HCT116 (cell line): ENCODE measurements at regions of chr15 and their contacts with region 1.

Region 1: GRCh38 chr15:69058830-69059556 is 44.5 kb downstream of the NOX5 start:
- DNase-seq: peak; percentile 88
- ATAC-seq: peak; percentile 87
- H3K4me3 ChIP-seq: no peak overlapping the region
- H3K27ac ChIP-seq: no peak overlapping the region
- H3K4me1 ChIP-seq: peaks cover 0 to 24% of the 10 kb centered on the region in 2 experiments; a peak in 2 of 4 replicates
- H3K27me3 ChIP-seq: no peaks in the 10 kb centered on the region
- CTCF ChIP-seq: peak; percentile 80 to 92 (median 92)
- POLR2A ChIP-seq: no peak
- RAD21 ChIP-seq: peak; percentile 97

Region 2: GRCh38 chr15:68852461-68852860 is 206.5 kb before region 1 on chr15:
- CTCF ChIA-PET with region 1: no interaction called
- POLR2A ChIA-PET with region 1: no interaction called
- RAD21 ChIA-PET with region 1: no interaction called
- intact Hi-C with region 1: no loop called
- DNase-seq: no peak
- ATAC-seq: no peak
- H3K4me3 ChIP-seq: no peak overlapping the region
- H3K27ac ChIP-seq: no peak overlapping the region
- H3K4me1 ChIP-seq: no peaks in the 10 kb centered on the region
- H3K27me3 ChIP-seq: no peaks in the 10 kb centered on the region
- CTCF ChIP-seq: no peak
- POLR2A ChIP-seq: no peak
- RAD21 ChIP-seq: no peak

Region 3: GRCh38 chr15:69225355-69226025 is 166.5 kb after region 1 on chr15:
- CTCF ChIA-PET with region 1: interaction called, 10 read pairs
- POLR2A ChIA-PET with region 1: no interaction called
- RAD21 ChIA-PET with region 1: interaction called in 1 of 2 experiments, 5 read pairs
- intact Hi-C with region 1: loop called (anchors 1 kb)
- DNase-seq: peak; percentile 26
- ATAC-seq: 0 out of 2 replicates have a peak, but pooled peaks have one; percentile 49
- H3K4me3 ChIP-seq: no peak overlapping the region
- H3K27ac ChIP-seq: no peak overlapping the region
- H3K4me1 ChIP-seq: no peaks in the 10 kb centered on the region
- H3K27me3 ChIP-seq: no peaks in the 10 kb centered on the region
- CTCF ChIP-seq: peak; percentile 12 to 56 (median 49); a peak in 4 of 6 replicates
- POLR2A ChIP-seq: no peak
- RAD21 ChIP-seq: peak; percentile 75

Region 4: GRCh38 chr15:69265347-69265955 is 206.5 kb after region 1 on chr15:
- CTCF ChIA-PET with region 1: interaction called, 7 read pairs
- POLR2A ChIA-PET with region 1: no interaction called
- RAD21 ChIA-PET with region 1: no interaction called
- intact Hi-C with region 1: loop called (anchors 1 kb)
- DNase-seq: peak; percentile 34
- ATAC-seq: peak; percentile 61
- H3K4me3 ChIP-seq: no peak overlapping the region
- H3K27ac ChIP-seq: no peak overlapping the region
- H3K4me1 ChIP-seq: no peaks in the 10 kb centered on the region
- H3K27me3 ChIP-seq: no peaks in the 10 kb centered on the region
- CTCF ChIP-seq: peak; percentile 49 to 73 (median 57); a peak in 5 of 6 replicates
- POLR2A ChIP-seq: no peak
- RAD21 ChIP-seq: peak; percentile 73

Region 5: GRCh38 chr15:69394556-69395282 is 335.7 kb after region 1 on chr15:
- CTCF ChIA-PET with region 1: interaction called, 18 read pairs
- POLR2A ChIA-PET with region 1: no interaction called
- RAD21 ChIA-PET with region 1: interaction called in 1 of 2 experiments, 4 read pairs
- intact Hi-C with region 1: loop called (anchors 1 kb)
- DNase-seq: peak; percentile 16
- ATAC-seq: peak; percentile 96
- H3K4me3 ChIP-seq: no peak overlapping the region
- H3K27ac ChIP-seq: no peak overlapping the region
- H3K4me1 ChIP-seq: peaks cover 18 to 39% of the 10 kb centered on the region in 2 experiments
- H3K27me3 ChIP-seq: no peaks in the 10 kb centered on the region
- CTCF ChIP-seq: peak; percentile 75 to 93 (median 91)
- POLR2A ChIP-seq: no peak
- RAD21 ChIP-seq: peak; percentile 91

Region 6: GRCh38 chr15:69410290-69410874 is 351.4 kb after region 1 on chr15:
- CTCF ChIA-PET with region 1: interaction called, 4 read pairs
- POLR2A ChIA-PET with region 1: no interaction called
- RAD21 ChIA-PET with region 1: no interaction called
- intact Hi-C with region 1: loop called (anchors 1 kb)
- DNase-seq: peak; percentile 22
- ATAC-seq: peak; percentile 58
- H3K4me3 ChIP-seq: no peak overlapping the region
- H3K27ac ChIP-seq: no peak overlapping the region
- H3K4me1 ChIP-seq: peaks cover 0 to 19% of the 10 kb centered on the region in 2 experiments; a peak in 3 of 4 replicates
- H3K27me3 ChIP-seq: no peaks in the 10 kb centered on the region
- CTCF ChIP-seq: peak; percentile 40 to 61 (median 61); a peak in 5 of 6 replicates
- POLR2A ChIP-seq: no peak
- RAD21 ChIP-seq: peak; percentile 72

Region 7: GRCh38 chr15:69468241-69469121 is 409.5 kb after region 1 on chr15:
- CTCF ChIA-PET with region 1: interaction called, 5 read pairs
- POLR2A ChIA-PET with region 1: no interaction called
- RAD21 ChIA-PET with region 1: no interaction called
- intact Hi-C with region 1: loop called (anchors 1 kb)
- DNase-seq: no peak
- ATAC-seq: peak; percentile 56
- H3K4me3 ChIP-seq: no peak overlapping the region
- H3K27ac ChIP-seq: no peak overlapping the region
- H3K4me1 ChIP-seq: peaks cover 0 to 34% of the 10 kb centered on the region in 2 experiments; a peak in 3 of 4 replicates
- H3K27me3 ChIP-seq: no peaks in the 10 kb centered on the region
- CTCF ChIP-seq: no peak
- POLR2A ChIP-seq: no peak
- RAD21 ChIP-seq: no peak

Region 8: GRCh38 chr15:69869881-69870505 is 811.0 kb after region 1 on chr15:
- CTCF ChIA-PET with region 1: no interaction called
- POLR2A ChIA-PET with region 1: no interaction called
- RAD21 ChIA-PET with region 1: no interaction called
- intact Hi-C with region 1: no loop called
- DNase-seq: no peak
- ATAC-seq: no peak
- H3K4me3 ChIP-seq: no peak overlapping the region
- H3K27ac ChIP-seq: no peak overlapping the region
- H3K4me1 ChIP-seq: peaks cover 8 to 10% of the 10 kb centered on the region in 2 experiments; a peak in 3 of 4 replicates
- H3K27me3 ChIP-seq: no peaks in the 10 kb centered on the region
- CTCF ChIP-seq: no peak
- POLR2A ChIP-seq: no peak
- RAD21 ChIP-seq: no peak